PC-9 (cell line): ENCODE measurements at regions of chr5 and their contacts with region 1.

Region 1: DNA sequence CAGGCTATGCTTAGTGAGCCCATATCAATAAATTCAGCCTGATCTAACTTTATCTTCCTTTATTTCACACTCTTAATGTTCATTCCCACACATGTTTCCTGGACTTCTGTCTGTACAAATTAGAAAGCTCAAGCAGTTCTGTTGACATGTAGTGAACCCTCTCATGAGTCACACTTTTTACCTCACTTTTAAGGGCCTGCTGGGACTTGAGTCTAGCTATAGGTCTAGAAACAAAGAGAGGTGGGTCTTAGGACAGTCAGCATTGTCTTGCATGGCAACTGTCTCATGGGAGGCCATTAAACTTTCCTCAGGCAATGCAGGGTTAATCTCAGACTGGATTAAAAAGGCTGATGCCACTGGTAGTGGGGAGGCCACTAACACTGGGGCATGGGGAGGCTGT is 8.6 kb upstream of the CCNH start:
- DNase-seq: no peak
- H3K4me3 ChIP-seq: no peak overlapping the region
- H3K27ac ChIP-seq: no peak overlapping the region
- H3K4me1 ChIP-seq: no peaks in the 10 kb centered on the region
- H3K27me3 ChIP-seq: no peaks in the 10 kb centered on the region
- CTCF ChIP-seq: no peak

Region 2: DNA sequence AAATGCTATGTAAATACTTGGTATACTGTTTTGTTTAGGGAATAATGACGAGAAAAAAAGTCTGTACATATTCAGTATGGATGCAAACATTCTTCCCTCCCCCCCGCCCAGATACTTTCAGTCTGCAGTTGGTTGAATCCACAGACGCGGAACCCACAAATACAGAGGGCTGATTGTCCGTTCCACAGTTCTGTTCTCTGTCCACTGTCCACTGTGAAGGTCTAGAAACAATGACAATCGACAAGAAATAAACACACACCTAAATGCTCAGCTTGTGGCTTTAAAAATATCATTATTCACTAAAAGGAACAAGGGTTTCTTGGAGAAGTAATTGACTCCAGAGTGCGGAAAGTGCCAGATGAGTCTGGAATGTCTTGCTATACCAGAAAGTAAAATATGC is 738.3 kb after region 1 on chr5:
- CTCF ChIA-PET with region 1: no interaction called
- POLR2A ChIA-PET with region 1: no interaction called
- intact Hi-C with region 1: no loop called
- DNase-seq: no peak
- H3K4me3 ChIP-seq: no peak overlapping the region
- H3K27ac ChIP-seq: no peak overlapping the region
- H3K4me1 ChIP-seq: no peaks in the 10 kb centered on the region
- H3K27me3 ChIP-seq: no peaks in the 10 kb centered on the region
- CTCF ChIP-seq: no peak

Region 3: DNA sequence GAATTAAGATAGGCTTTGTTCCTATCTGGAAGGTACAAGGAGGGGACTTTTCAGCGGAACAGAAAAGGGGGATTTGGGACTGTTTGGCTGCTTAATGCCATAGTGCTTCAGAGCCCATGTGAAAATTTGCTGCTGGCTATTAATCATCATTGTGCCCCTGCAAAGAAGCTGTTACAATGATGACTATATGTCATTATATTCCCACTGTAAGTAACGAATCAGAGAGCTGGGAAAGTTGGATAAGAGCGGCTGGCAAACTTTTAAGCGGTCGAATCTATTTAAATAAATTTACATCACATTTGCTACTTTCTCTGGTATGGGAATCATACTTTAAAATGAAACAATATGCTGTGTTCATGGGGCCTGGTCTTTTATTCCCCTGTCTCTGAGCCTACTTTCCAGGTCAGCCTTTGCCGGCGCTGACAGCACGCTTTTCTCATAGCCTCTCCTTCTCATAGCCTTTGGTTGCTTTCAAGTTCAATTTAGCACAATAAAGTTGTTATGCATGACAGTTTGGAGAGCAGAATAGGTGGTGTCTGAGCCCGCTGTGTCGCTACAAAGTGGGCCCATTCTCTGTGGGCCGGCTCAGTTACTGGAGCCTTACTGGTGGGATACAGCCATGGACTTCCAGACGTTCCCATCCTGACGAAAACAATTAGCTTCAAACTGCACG is 1118.5 kb after region 1 on chr5:
- CTCF ChIA-PET with region 1: no interaction called
- POLR2A ChIA-PET with region 1: no interaction called
- intact Hi-C with region 1: no loop called
- DNase-seq: no peak
- H3K4me3 ChIP-seq: no peak overlapping the region
- H3K27ac ChIP-seq: no peak overlapping the region
- H3K4me1 ChIP-seq: no peaks in the 10 kb centered on the region
- H3K27me3 ChIP-seq: no peaks in the 10 kb centered on the region
- CTCF ChIP-seq: no peak

Region 4: DNA sequence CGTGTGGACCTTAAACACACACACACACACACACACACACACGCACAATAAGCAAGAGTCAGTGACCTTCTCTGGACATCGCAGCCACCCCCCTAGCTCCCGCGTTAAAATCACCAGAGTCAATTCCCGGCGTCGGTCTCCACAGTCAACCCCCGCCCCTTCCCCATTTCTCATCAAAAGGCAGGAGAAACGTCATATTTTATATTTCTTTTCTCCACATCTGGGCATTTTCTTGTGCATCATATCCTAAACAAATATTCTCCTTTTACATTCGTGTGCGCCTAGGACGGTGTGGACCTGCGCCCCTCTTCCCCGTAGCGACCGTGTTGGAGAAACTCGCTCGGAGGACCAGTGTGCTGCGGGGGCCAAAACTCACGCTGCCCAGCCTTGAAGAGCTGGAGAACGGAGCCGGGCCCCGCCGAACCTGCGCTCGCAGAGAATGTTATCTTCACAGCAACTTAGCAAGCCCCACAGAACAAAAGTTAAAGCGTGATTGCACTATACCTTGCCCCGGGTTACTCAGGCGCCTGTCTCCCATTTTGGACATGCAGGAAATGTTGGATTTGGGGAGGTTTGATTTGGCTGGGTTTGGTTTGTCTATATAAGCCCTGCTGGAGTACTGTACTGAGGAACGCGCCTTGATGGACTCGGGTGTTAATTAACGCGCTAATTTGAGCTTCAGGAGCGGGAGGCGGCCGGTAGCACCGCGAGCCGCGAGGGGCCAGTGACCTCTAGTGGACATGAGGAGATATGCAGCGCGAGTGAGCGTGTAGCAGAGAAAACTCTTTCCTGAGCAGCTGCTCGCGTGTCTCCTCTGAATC is 1269.3 kb after region 1 on chr5:
- CTCF ChIA-PET with region 1: no interaction called
- POLR2A ChIA-PET with region 1: no interaction called
- intact Hi-C with region 1: loop called (anchors 5 kb)
- DNase-seq: peak in 1 of 2 experiments; percentile 62
- H3K4me3 ChIP-seq: peak overlapping the region; percentile 24; the same call in 1 of the 2 replicates
- H3K27ac ChIP-seq: no peak overlapping the region
- H3K4me1 ChIP-seq: peaks cover 18% of the 10 kb centered on the region
- H3K27me3 ChIP-seq: no peaks in the 10 kb centered on the region
- CTCF ChIP-seq: peak; percentile 95